Activated CD8-positive, alpha-beta T cell treated with anti-CD3 and anti-CD28 coated beads for 36 hours (primary cell): ENCODE measurements at regions of chr14 and their contacts with region 1.

Region 1: GRCh38 chr14:20413045-20413799 is at the start of gene TEP1:
- DNase-seq: peak; percentile 85
- ATAC-seq: peak; percentile 82
- H3K4me3 Mint-ChIP-seq: peak within 1 kb of the TSS; percentile 92
- H3K27ac Mint-ChIP-seq: peak within 1 kb of the TSS; percentile 97
- H3K4me1 Mint-ChIP-seq: peaks cover 45% of the 10 kb centered on the region
- H3K27me3 Mint-ChIP-seq: no peaks in the 10 kb centered on the region
- CTCF ChIP-seq: no peak
- total RNA-seq, gene TEP1: 22.8 to 25.3 TPM

Region 2: GRCh38 chr14:20327005-20327869 is 86.0 kb before region 1 on chr14:
- CTCF ChIA-PET with region 1: interaction called, 15 read pairs
- POLR2A ChIA-PET with region 1: no interaction called
- intact Hi-C with region 1: loop called (anchors 5 kb)
- DNase-seq: peak; percentile 13
- ATAC-seq: peak; percentile 53
- H3K4me3 Mint-ChIP-seq: peak overlapping the region; percentile 0
- H3K27ac Mint-ChIP-seq: peak overlapping the region; percentile 41
- H3K4me1 Mint-ChIP-seq: peaks cover 36% of the 10 kb centered on the region
- H3K27me3 Mint-ChIP-seq: no peaks in the 10 kb centered on the region
- CTCF ChIP-seq: peak; percentile 87

Region 3: DNA sequence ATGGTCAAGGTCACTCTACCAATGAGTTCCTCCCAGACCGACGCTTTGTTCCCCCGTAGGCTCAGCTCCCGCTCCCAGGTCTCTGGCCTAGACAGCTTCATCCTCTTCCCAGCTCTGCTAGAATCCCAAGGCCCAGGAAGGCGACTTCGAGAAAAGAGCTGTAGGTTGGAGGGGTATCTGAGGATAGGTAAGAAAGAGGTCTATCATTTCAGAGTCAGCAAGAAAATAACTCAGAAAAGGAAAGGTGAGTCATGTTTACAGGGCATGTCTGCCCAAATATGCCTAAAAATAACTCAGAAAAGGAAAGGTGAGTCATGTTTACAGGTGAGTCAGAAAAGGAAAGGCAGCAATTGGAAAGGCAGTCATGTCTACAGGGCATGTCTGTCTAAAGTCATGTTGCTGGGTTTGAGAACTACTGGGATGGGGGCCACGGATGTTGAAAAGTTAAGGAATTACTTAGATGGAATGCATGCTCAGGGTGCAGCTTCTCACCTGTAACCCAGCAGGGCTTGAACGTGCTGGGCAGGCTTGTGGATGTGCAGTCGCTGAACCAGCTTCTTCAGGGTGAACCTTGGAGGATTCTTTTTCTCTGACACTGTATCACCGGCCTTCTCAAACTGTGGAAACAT is 12.1 kb before region 1 on chr14:
- CTCF ChIA-PET with region 1: interaction called, 33 read pairs
- POLR2A ChIA-PET with region 1: interaction called, 4 read pairs
- intact Hi-C with region 1: no loop called
- DNase-seq: peak; percentile 28
- ATAC-seq: peak; percentile 95
- H3K4me3 Mint-ChIP-seq: peak overlapping the region; percentile 25
- H3K27ac Mint-ChIP-seq: peak overlapping the region; percentile 89
- H3K4me1 Mint-ChIP-seq: peaks cover 34% of the 10 kb centered on the region
- H3K27me3 Mint-ChIP-seq: no peaks in the 10 kb centered on the region
- CTCF ChIP-seq: no peak

Region 4: GRCh38 chr14:20440882-20441281 is 27.7 kb after region 1 on chr14:
- CTCF ChIA-PET with region 1: interaction called, 10 read pairs
- POLR2A ChIA-PET with region 1: interaction called, 14 read pairs
- intact Hi-C with region 1: no loop called
- DNase-seq: peak; percentile 70
- ATAC-seq: peak; percentile 95
- H3K4me3 Mint-ChIP-seq: peak overlapping the region; percentile 51
- H3K27ac Mint-ChIP-seq: peak overlapping the region; percentile 82
- H3K4me1 Mint-ChIP-seq: peaks cover 22% of the 10 kb centered on the region
- H3K27me3 Mint-ChIP-seq: no peaks in the 10 kb centered on the region
- CTCF ChIP-seq: no peak

Region 5: DNA sequence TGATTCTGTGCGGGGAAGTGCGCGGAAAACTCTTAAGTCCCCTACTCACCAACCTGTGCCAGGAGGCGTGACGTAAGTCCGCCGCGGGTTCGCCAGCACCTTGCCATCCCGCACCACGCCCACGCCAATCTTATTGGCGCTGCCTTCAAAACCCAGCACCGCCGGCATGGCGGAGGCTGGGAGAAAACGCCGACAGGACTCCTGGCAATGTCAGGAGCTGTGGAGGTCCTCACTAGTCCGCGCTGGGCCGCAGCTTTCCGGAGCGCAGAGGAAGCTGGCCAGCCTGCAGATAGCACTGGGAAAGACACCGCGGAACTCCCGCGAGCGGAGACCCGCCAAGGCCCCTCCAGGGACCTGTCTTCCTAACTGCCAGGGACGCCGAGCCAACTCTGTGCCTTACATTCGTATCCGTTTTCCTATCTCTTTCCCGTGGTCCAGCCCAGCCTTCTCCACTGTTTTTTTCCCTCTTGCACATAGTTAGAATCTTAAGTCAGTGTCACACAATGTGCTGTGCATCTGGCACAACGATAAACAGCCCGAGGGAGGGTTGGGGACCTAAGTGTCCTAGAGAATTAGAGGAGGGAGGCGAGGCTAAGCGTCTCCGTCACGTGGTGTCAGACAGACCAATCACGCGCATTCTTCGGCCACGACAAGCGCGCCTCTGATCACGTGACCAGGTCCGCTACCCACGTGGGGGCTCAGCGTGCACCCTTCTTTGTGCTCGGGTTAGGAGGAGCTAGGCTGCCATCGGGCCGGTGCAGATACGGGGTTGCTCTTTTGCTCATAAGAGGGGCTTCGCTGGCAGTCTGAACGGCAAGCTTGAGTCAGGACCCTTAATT is 41.5 kb after region 1 on chr14 and contains the starts of genes APEX1 and OSGEP:
- CTCF ChIA-PET with region 1: interaction called, 72 read pairs
- POLR2A ChIA-PET with region 1: interaction called, 43 read pairs
- intact Hi-C with region 1: loop called (anchors 2 kb)
- DNase-seq: peak; percentile 99
- ATAC-seq: peak; percentile 91
- H3K4me3 Mint-ChIP-seq: no peak within 1 kb of the TSS
- H3K27ac Mint-ChIP-seq: no peak within 1 kb of the TSS
- H3K4me1 Mint-ChIP-seq: peaks cover 19% of the 10 kb centered on the region
- H3K27me3 Mint-ChIP-seq: no peaks in the 10 kb centered on the region
- CTCF ChIP-seq: no peak
- total RNA-seq, gene APEX1: 196 to 211 TPM
- total RNA-seq, gene OSGEP: 39.5 to 40.7 TPM

Region 6: DNA sequence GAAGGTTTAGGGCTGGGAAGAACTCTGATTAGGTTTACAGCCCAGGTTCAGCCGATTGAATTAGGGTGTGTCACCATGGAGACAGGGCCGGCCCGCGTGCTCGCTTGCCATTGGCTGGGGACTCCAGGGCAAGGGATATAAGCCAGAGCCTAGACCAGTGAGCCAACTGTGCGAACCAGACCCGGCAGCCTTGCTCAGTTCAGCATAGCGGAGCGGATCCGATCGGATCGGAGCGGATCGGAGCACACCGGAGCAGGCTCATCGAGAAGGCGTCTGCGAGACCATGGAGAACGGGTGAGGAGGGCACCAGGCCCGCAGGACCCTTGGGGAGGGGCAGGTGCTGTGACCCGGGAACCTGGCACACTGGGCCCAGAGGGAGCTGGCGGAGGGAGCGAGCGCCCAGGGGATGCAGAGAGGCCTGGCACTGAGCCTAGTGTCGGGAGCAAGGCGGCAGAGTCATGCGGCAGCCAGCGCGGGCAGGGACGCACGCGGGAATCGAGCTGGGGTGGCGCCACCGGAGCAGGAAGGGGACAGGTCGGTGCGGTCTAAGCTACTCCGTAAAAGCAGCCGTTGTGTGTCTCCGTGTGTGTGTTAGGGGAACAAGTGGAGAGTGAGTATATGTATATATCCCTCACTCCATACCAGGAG is 56.1 kb after region 1 on chr14 and contains the start of gene PNP:
- CTCF ChIA-PET with region 1: interaction called, 6 read pairs
- POLR2A ChIA-PET with region 1: interaction called, 26 read pairs
- intact Hi-C with region 1: no loop called
- DNase-seq: peak; percentile 92
- ATAC-seq: peak; percentile 94
- H3K4me3 Mint-ChIP-seq: peak within 1 kb of the TSS; percentile 86
- H3K27ac Mint-ChIP-seq: peak within 1 kb of the TSS; percentile 93
- H3K4me1 Mint-ChIP-seq: peaks cover 33% of the 10 kb centered on the region
- H3K27me3 Mint-ChIP-seq: no peaks in the 10 kb centered on the region
- CTCF ChIP-seq: no peak
- total RNA-seq, gene PNP: 176 to 183 TPM

Region 7: DNA sequence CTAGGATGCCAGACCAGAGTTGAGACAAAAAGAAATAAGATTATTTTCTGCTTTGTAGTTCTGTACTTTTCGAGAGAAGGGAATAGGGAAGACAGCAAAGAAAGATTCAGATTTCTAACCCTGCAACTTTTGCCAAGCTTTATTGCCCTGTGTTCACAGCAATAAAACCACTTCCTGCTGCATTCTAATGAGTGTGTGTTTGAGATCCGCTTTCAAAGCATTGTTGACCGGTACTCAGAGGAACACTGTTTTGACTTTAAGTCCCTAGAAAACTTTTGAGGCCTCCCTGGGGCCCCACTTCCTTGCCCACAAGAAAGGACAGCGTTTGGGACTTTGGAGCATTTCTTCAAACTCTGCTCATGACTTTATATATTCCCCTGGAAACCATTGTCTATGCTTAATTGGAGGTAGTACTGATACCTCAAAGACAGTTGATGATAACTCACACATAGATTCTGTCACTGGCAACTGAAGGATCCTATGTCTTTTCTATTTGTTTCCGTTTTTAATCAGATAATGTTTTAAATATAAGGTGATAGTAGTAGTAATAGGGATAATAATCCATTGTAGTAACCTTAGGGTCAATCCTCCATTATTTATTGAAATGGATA is 369.2 kb after region 1 on chr14:
- CTCF ChIA-PET with region 1: no interaction called
- POLR2A ChIA-PET with region 1: no interaction called
- intact Hi-C with region 1: no loop called
- DNase-seq: peak; percentile 4
- ATAC-seq: peak; percentile 67
- H3K4me3 Mint-ChIP-seq: peak overlapping the region; percentile 49
- H3K27ac Mint-ChIP-seq: peak overlapping the region; percentile 39
- H3K4me1 Mint-ChIP-seq: peaks cover 20% of the 10 kb centered on the region
- H3K27me3 Mint-ChIP-seq: peaks cover 2% of the 10 kb centered on the region
- CTCF ChIP-seq: no peak